ENCODE measurements at regions of chr12 and their contacts with region 1.

Region 1: GRCh38 chr12:56078990-56079664 is 838 bp upstream of the ERBB3 start:
- DNase-seq: peak; percentile 44
- H3K4me3 ChIP-seq: peak overlapping the region; percentile 50
- H3K27me3 ChIP-seq: peaks cover 5% of the 10 kb centered on the region
- CTCF ChIP-seq: peak; percentile 84

Region 2: GRCh38 chr12:55407866-55408265 is 671.3 kb before region 1 on chr12:
- CTCF ChIA-PET with region 1: no interaction called
- POLR2A ChIA-PET with region 1: no interaction called
- DNase-seq: no peak
- H3K4me3 ChIP-seq: no peak overlapping the region
- H3K27me3 ChIP-seq: no peaks in the 10 kb centered on the region
- CTCF ChIP-seq: no peak

Region 3: GRCh38 chr12:55862286-55862685 is 216.8 kb before region 1 on chr12:
- CTCF ChIA-PET with region 1: no interaction called
- POLR2A ChIA-PET with region 1: no interaction called
- DNase-seq: no peak
- H3K4me3 ChIP-seq: no peak overlapping the region
- H3K27me3 ChIP-seq: no peaks in the 10 kb centered on the region
- CTCF ChIP-seq: no peak

Region 4: GRCh38 chr12:56020423-56021184 is 58.5 kb before region 1 on chr12 and contains the start of gene IKZF4:
- CTCF ChIA-PET with region 1: no interaction called
- POLR2A ChIA-PET with region 1: no interaction called
- DNase-seq: no peak
- H3K4me3 ChIP-seq: peak within 1 kb of the TSS; percentile 23
- H3K27me3 ChIP-seq: no peaks in the 10 kb centered on the region
- CTCF ChIP-seq: no peak
- polyA plus RNA-seq, gene IKZF4: 1.9 and 2.9 TPM in 2 replicates

Region 5: GRCh38 chr12:56062996-56063395 is 16.1 kb before region 1 on chr12:
- CTCF ChIA-PET with region 1: interaction called, 12 read pairs
- POLR2A ChIA-PET with region 1: no interaction called
- DNase-seq: no peak
- H3K4me3 ChIP-seq: no peak overlapping the region
- H3K27me3 ChIP-seq: no peaks in the 10 kb centered on the region
- CTCF ChIP-seq: no peak

Region 6: GRCh38 chr12:56104109-56104814 is 25.1 kb after region 1 on chr12 and contains the start of gene PA2G4:
- CTCF ChIA-PET with region 1: interaction called, 20 read pairs
- POLR2A ChIA-PET with region 1: interaction called, 7 read pairs
- DNase-seq: peak; percentile 97
- H3K4me3 ChIP-seq: peak within 1 kb of the TSS; percentile 94
- H3K27me3 ChIP-seq: no peaks in the 10 kb centered on the region
- CTCF ChIP-seq: no peak
- polyA plus RNA-seq, gene PA2G4: 134 and 215 TPM in 2 replicates